HCT116 (cell line): ENCODE measurements at regions of chr9 and their contacts with region 1.

Region 1: GRCh38 chr9:137188490-137189296 is at the starts of genes ANAPC2 and SSNA1:
- DNase-seq: peak; percentile 89
- ATAC-seq: peak; percentile 84
- H3K4me3 ChIP-seq: peak within 1 kb of the TSS; percentile 98 to 100
- H3K27ac ChIP-seq: peak within 1 kb of the TSS; percentile 99
- H3K4me1 ChIP-seq: peaks cover 16 to 33% of the 10 kb centered on the region in 2 experiments
- H3K27me3 ChIP-seq: no peaks in the 10 kb centered on the region
- CTCF ChIP-seq: peak in 2 of 3 experiments; percentile 32 to 38; a peak in 3 of 6 replicates
- POLR2A ChIP-seq: peak; percentile 90
- RAD21 ChIP-seq: no peak
- total RNA-seq, gene ANAPC2: 75.5 TPM
- total RNA-seq, gene SSNA1: 84.7 TPM

Region 2: GRCh38 chr9:137200311-137201204 is 11.9 kb after region 1 on chr9 and contains the start of gene TPRN:
- CTCF ChIA-PET with region 1: interaction called, 3 read pairs
- POLR2A ChIA-PET with region 1: interaction called, 20 read pairs
- RAD21 ChIA-PET with region 1: interaction called in 1 of 2 experiments, 4 read pairs
- intact Hi-C with region 1: no loop called
- DNase-seq: peak; percentile 96
- ATAC-seq: peak; percentile 93
- H3K4me3 ChIP-seq: peak within 1 kb of the TSS; percentile 61 to 81
- H3K27ac ChIP-seq: peak within 1 kb of the TSS; percentile 85
- H3K4me1 ChIP-seq: peaks cover 32 to 54% of the 10 kb centered on the region in 2 experiments
- H3K27me3 ChIP-seq: no peaks in the 10 kb centered on the region
- CTCF ChIP-seq: no peak
- POLR2A ChIP-seq: peak; percentile 95
- RAD21 ChIP-seq: no peak
- total RNA-seq, gene TPRN: 24.9 TPM